ENCODE measurements at regions of chr1 and their contacts with region 1.

Region 1: GRCh38 chr1:153990468-153991150 is at the start of gene RPS27:
- DNase-seq: peak; percentile 88
- H3K4me3 ChIP-seq: peak within 1 kb of the TSS; percentile 69
- CTCF ChIP-seq: no peak

Region 2: DNA sequence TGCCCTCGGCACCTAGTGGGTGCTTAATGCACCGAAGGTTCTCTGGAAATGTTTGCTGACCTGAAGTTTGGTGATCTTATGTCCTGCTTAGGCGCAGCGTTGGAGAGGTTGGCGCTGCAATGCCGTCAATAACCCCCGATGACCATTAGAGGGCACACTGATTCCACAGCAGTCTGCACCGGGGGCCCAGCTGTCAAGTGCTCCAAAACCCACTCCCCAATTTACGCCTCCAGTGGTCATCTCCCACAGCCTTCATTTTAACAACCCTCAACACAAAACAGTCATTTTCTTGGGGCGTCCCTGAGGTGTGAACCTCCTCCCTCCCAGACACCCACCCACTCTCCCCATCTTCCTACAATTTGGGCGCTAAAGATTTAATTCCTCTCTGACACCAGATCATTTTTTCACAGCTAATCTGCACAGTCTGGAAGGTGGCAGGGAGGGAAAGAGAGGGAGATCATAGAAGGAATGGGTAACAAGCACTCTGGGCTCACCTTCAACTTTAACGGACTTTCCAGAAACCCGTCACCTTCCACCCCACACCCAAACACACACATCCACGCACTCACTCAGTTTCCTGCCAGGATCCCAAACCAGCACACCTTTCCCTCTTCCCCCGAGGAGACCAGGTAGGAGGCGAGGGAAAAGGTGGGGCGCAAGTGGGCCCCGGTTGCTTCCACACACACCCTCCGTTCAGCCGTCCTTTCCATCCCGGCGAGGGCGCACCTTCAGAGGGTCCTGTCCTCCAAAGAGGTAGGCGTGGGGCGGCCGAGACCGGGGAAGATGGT is 312.7 kb before region 1 on chr1:
- CTCF ChIA-PET with region 1: interaction called, 71 read pairs
- POLR2A ChIA-PET with region 1: no interaction called
- DNase-seq: no peak
- H3K4me3 ChIP-seq: peak overlapping the region; percentile 39
- CTCF ChIP-seq: peak; percentile 92

Region 3: GRCh38 chr1:153790966-153791647 is 199.5 kb before region 1 on chr1:
- CTCF ChIA-PET with region 1: interaction called, 88 read pairs
- POLR2A ChIA-PET with region 1: interaction called, 10 read pairs
- DNase-seq: peak; percentile 72
- H3K4me3 ChIP-seq: peak overlapping the region; percentile 32
- CTCF ChIP-seq: no peak

Region 4: DNA sequence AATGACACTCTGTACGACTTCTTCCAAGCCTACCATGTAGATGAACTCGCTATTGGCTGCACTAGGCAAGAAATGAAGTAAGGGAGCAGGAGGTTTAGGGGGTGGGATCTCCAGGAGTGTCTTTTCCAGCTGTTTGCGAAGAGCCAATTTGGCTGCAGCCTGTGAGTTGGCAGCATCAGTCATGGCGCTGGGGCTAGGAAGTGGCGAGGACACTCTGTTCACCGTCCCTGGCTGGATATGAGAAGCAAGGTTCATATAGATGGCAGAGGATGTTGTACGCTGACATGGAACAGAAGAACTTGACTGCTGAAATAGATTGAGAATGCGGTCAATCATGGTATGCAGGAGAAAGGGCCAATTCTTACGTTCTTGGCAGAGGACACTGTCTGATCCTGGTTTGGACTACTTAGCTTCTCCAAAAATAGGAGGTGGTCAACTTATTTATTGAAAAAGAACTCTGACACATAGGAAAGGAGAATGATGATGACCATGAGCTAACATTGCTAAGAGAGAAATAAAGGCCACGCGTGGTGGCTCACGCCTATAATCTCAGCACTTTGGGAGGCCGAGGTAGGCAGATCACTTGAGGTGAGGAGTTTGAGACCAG is 174.2 kb before region 1 on chr1:
- CTCF ChIA-PET with region 1: interaction called, 65 read pairs
- POLR2A ChIA-PET with region 1: interaction called, 3 read pairs
- DNase-seq: no peak
- H3K4me3 ChIP-seq: no peak overlapping the region
- CTCF ChIP-seq: no peak

Region 5: GRCh38 chr1:153967082-153968000 is 23.3 kb before region 1 on chr1 and contains the start of gene CREB3L4:
- CTCF ChIA-PET with region 1: interaction called, 45 read pairs
- POLR2A ChIA-PET with region 1: interaction called, 19 read pairs
- DNase-seq: peak; percentile 90
- H3K4me3 ChIP-seq: peak within 1 kb of the TSS; percentile 73
- CTCF ChIP-seq: peak; percentile 59

Region 6: GRCh38 chr1:154097873-154098272 is 107.3 kb after region 1 on chr1:
- CTCF ChIA-PET with region 1: no interaction called
- POLR2A ChIA-PET with region 1: no interaction called
- DNase-seq: no peak
- H3K4me3 ChIP-seq: no peak overlapping the region
- CTCF ChIP-seq: no peak

Measured in AG04449 (cell line).